ENCODE measurements at regions of chr11 and their contacts with region 1.

Region 1: DNA sequence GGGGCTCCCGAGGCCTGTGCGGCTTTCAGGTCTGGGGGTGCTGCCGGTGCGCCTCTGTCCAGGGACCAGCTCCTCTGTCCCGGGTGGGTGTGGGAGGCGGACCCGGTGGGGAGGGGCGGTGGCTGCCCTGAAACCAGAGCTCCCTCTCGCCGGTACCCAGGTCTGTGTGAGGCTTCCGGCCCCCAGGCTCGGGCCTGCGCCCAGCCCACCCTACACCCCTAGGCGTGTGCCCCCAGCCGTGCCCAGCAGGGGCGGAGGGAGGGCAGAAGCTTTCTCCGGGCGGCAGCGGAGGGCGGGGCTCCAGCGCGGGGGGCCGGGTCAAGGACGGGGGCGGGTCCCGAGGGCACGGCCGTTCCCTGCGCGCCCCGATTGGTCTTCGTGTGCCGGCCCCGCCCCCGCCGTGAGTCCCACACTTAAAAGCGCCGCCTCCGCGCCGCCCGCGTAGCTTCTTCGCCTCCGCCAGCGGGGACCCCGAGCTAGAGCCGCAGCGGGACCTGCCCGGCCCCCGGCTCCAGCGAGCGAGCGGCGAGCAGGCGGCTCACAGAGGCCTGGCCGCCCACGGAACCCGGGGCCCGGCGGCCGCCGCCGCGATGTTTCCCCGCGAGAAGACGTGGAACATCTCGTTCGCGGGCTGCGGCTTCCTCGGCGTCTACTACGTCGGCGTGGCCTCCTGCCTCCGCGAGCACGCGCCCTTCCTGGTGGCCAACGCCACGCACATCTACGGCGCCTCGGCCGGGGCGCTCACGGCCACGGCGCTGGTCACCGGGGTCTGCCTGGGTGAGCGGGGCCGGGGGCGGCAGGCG is 616 bp downstream of the PNPLA2 start:
- DNase-seq: peak; percentile 89 to 92 (median 91)
- H3K4me3 ChIP-seq: peak overlapping the region in 1 of 2 donors; percentile 73
- H3K4me3 Mint-ChIP-seq: peak overlapping the region; percentile 11 to 94 (median 89)
- H3K27ac ChIP-seq: peak overlapping the region; percentile 81
- H3K27ac Mint-ChIP-seq: peak overlapping the region in 6 of 7 donors; percentile 88 to 94 (median 92)
- H3K4me1 ChIP-seq: peaks cover 22% of the 10 kb centered on the region
- H3K4me1 Mint-ChIP-seq: peaks cover 2 to 22% (median 11%) of the 10 kb centered on the region in 4 donors
- H3K27me3 ChIP-seq: no peaks in the 10 kb centered on the region
- H3K27me3 Mint-ChIP-seq: no peaks in the 10 kb centered on the region

Region 2: GRCh38 chr11:709109-709997 is 110.0 kb before region 1 on chr11:
- CTCF ChIA-PET with region 1: no interaction called
- POLR2A ChIA-PET with region 1: no interaction called
- intact Hi-C with region 1: no loop called
- DNase-seq: peak in 1 of 5 donors; percentile 26
- H3K4me3 ChIP-seq: no peak overlapping the region
- H3K4me3 Mint-ChIP-seq: no peak overlapping the region
- H3K27ac ChIP-seq: no peak overlapping the region
- H3K27ac Mint-ChIP-seq: no peak overlapping the region
- H3K4me1 ChIP-seq: peaks cover 5% of the 10 kb centered on the region
- H3K4me1 Mint-ChIP-seq: peaks cover 0 to 6% (median 2%) of the 10 kb centered on the region in 4 donors
- H3K27me3 ChIP-seq: peaks cover 12% of the 10 kb centered on the region
- H3K27me3 Mint-ChIP-seq: peaks cover 4 to 10% of the 10 kb centered on the region in 2 donors

Region 3: GRCh38 chr11:803770-804598 is 15.3 kb before region 1 on chr11:
- CTCF ChIA-PET with region 1: interaction called, 3 read pairs
- POLR2A ChIA-PET with region 1: interaction called, 109 read pairs
- intact Hi-C with region 1: loop called (anchors 1 kb)
- DNase-seq: no peak
- H3K4me3 ChIP-seq: peak overlapping the region; percentile 61 to 66
- H3K4me3 Mint-ChIP-seq: peak overlapping the region; percentile 75 to 85 (median 78)
- H3K27ac ChIP-seq: peak overlapping the region; percentile 73
- H3K27ac Mint-ChIP-seq: peak overlapping the region in 4 of 7 donors; percentile 36 to 83 (median 66)
- H3K4me1 ChIP-seq: peaks cover 26% of the 10 kb centered on the region
- H3K4me1 Mint-ChIP-seq: peaks cover 2 to 28% (median 11%) of the 10 kb centered on the region in 4 donors
- H3K27me3 ChIP-seq: no peaks in the 10 kb centered on the region
- H3K27me3 Mint-ChIP-seq: no peaks in the 10 kb centered on the region

Region 4: GRCh38 chr11:832321-833113 is 13.2 kb after region 1 on chr11 and contains the start of gene CD151:
- CTCF ChIA-PET with region 1: no interaction called
- POLR2A ChIA-PET with region 1: interaction called, 101 read pairs
- intact Hi-C with region 1: loop called (anchors 2 kb)
- DNase-seq: peak in 1 of 5 donors; percentile 45
- H3K4me3 ChIP-seq: peak within 1 kb of the TSS in 1 of 2 donors; percentile 43
- H3K4me3 Mint-ChIP-seq: peak within 1 kb of the TSS; percentile 51 to 82 (median 68)
- H3K27ac ChIP-seq: peak within 1 kb of the TSS; percentile 15
- H3K27ac Mint-ChIP-seq: peak within 1 kb of the TSS in 3 of 7 donors; percentile 19 to 63 (median 36)
- H3K4me1 ChIP-seq: peaks cover 52% of the 10 kb centered on the region
- H3K4me1 Mint-ChIP-seq: peaks cover 2 to 43% (median 19%) of the 10 kb centered on the region in 4 donors
- H3K27me3 ChIP-seq: peaks cover 3% of the 10 kb centered on the region
- H3K27me3 Mint-ChIP-seq: peaks cover 7 to 13% of the 10 kb centered on the region in 2 donors
- total RNA-seq, gene CD151: 20.7 to 23.4 TPM

Region 5: GRCh38 chr11:842370-843002 is 23.2 kb after region 1 on chr11 and contains the starts of genes POLR2L and TSPAN4:
- CTCF ChIA-PET with region 1: interaction called, 4 read pairs
- POLR2A ChIA-PET with region 1: interaction called, 57 read pairs
- intact Hi-C with region 1: loop called (anchors 1 kb)
- DNase-seq: peak; percentile 83 to 94 (median 85)
- H3K4me3 ChIP-seq: peak within 1 kb of the TSS; percentile 57 to 97
- H3K4me3 Mint-ChIP-seq: peak within 1 kb of the TSS; percentile 84 to 89 (median 86)
- H3K27ac ChIP-seq: peak within 1 kb of the TSS; percentile 77
- H3K27ac Mint-ChIP-seq: peak within 1 kb of the TSS; percentile 66 to 89 (median 84)
- H3K4me1 ChIP-seq: peaks cover 31% of the 10 kb centered on the region
- H3K4me1 Mint-ChIP-seq: peaks cover 4 to 35% (median 15%) of the 10 kb centered on the region in 4 donors
- H3K27me3 ChIP-seq: no peaks in the 10 kb centered on the region
- H3K27me3 Mint-ChIP-seq: peaks cover 0 to 2% of the 10 kb centered on the region in 2 donors
- total RNA-seq, gene POLR2L: 55.8 to 56.2 TPM
- total RNA-seq, gene TSPAN4: 5.3 to 5.8 TPM

Region 6: GRCh38 chr11:975827-976226 is 156.5 kb after region 1 on chr11:
- CTCF ChIA-PET with region 1: no interaction called
- POLR2A ChIA-PET with region 1: no interaction called
- intact Hi-C with region 1: no loop called
- DNase-seq: no peak
- H3K4me3 ChIP-seq: no peak overlapping the region
- H3K4me3 Mint-ChIP-seq: no peak overlapping the region
- H3K27ac ChIP-seq: no peak overlapping the region
- H3K27ac Mint-ChIP-seq: peak overlapping the region in 3 of 7 donors; percentile 42 to 61 (median 48)
- H3K4me1 ChIP-seq: peaks cover 3% of the 10 kb centered on the region
- H3K4me1 Mint-ChIP-seq: peaks cover 4 to 21% (median 10%) of the 10 kb centered on the region in 4 donors
- H3K27me3 ChIP-seq: no peaks in the 10 kb centered on the region
- H3K27me3 Mint-ChIP-seq: no peaks in the 10 kb centered on the region

Region 7: DNA sequence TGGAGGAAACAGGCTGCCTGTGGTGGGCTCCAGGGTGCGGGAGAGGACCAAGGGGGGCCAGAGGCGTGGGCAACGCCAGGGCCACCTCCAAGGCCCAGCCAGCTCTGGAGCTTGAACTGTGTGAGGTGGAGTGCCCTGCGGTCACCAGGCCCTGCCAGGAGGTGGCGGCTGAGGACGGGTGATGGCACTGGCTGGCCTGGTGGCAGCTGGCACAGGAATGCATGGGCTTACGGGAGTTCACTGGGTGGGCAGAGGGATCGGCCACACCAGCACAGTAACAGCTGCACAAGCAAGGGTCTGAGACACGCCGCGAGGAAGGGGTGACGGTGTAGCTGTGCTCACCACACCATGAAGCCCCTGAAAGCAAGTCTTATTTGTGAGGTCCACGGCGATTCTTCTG is 474.3 kb after region 1 on chr11:
- CTCF ChIA-PET with region 1: no interaction called
- POLR2A ChIA-PET with region 1: no interaction called
- intact Hi-C with region 1: no loop called
- DNase-seq: no peak
- H3K4me3 ChIP-seq: no peak overlapping the region
- H3K4me3 Mint-ChIP-seq: no peak overlapping the region
- H3K27ac ChIP-seq: no peak overlapping the region
- H3K27ac Mint-ChIP-seq: no peak overlapping the region
- H3K4me1 ChIP-seq: no peaks in the 10 kb centered on the region
- H3K4me1 Mint-ChIP-seq: peaks cover 0 to 12% (median 4%) of the 10 kb centered on the region in 4 donors
- H3K27me3 ChIP-seq: no peaks in the 10 kb centered on the region
- H3K27me3 Mint-ChIP-seq: no peaks in the 10 kb centered on the region